ENCODE measurements at regions of chr16 and their contacts with region 1.

Region 1: DNA sequence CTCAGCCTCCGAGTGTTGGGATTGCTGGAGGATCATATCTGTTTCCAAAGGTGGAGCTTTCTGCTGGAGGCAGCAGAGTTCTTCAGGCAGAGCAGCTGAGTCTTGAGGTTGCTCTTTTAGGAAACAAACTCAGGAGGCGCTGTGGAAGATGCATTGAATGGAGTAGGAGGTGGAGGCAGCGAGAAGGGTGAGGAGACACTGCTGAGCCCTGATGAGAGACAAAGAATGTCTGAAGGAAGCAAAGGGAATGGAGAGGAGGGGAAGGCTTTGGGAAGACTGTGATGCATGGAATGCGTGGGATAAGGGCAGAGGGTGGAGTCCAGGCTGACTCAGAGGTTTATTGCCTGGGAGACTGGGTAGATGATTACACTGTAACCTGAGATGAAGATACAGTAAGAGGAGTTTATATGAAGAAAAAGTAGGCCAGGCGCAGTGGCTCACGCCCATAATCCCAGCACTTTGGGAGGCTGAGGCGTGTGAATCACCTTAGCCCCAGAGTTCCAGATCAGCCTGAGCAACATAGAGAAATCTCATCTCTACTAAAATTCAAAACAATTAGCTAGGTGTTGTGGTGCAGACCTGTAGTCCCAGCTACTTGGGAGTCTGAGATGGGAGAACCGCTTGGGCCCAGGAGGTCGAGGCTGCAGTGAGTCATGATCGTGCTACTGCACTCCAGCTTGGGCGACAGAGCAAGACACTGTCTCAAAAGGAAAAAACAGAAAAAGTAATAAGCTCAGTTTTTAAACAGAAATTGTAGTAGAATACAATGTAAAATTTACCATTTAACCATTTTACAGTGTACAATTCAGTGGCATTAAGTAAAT is 17.8 kb upstream of the TMEM219 start:
- DNase-seq: peak; percentile 93
- H3K4me3 ChIP-seq: no peak overlapping the region
- CTCF ChIP-seq: peak; percentile 45

Region 2: GRCh38 chr16:29862884-29863668 is 81.0 kb before region 1 on chr16 and contains the start of gene CDIPT:
- in situ Hi-C with region 1: loop called (anchors 5 kb)
- DNase-seq: peak; percentile 96
- H3K4me3 ChIP-seq: peak within 1 kb of the TSS; percentile 86
- CTCF ChIP-seq: peak; percentile 76

Region 3: GRCh38 chr16:29891525-29892457 is 52.3 kb before region 1 on chr16:
- in situ Hi-C with region 1: no loop called
- DNase-seq: no peak
- H3K4me3 ChIP-seq: no peak overlapping the region
- CTCF ChIP-seq: no peak

Region 4: DNA sequence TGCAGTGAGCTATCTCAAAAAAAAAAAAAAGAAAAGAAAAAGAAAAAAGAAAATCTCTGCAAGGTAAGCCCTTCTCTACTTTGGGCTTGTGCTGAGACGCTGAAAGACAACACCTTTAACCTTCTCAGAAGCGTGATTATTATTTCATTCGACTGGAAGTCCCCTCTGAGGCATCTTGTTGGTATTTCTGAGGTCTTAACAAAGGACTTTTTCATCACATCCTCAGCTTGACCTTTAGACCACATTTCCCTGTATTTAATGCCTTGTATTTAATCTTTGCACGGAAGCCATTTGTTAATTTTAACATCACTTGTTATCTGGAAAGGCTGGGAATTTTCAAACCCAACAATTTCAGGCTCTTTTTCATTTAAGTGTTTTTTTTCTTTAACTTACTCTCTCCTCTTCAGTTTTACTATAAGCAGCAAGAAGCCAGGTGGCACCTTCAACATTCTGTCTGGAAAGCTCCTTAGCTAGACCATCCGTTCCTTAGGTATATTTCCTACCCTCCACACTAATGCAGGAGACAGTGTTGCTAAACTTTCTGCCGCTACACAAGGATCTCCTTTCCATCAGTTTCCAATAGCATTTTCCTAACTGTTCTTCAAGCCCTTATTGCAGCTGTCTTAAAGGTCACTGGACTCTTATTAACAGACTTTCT is 28.3 kb before region 1 on chr16:
- in situ Hi-C with region 1: no loop called
- DNase-seq: no peak
- H3K4me3 ChIP-seq: no peak overlapping the region
- CTCF ChIP-seq: no peak